Activated naive CD4-positive, alpha-beta T cell treated with anti-CD3 and anti-CD28 coated beads for 36 hours (primary cell): ENCODE measurements at regions of chr2 and their contacts with region 1.

Region 1: GRCh38 chr2:197255543-197255942 is 55.0 kb downstream of the ANKRD44 start:
- DNase-seq: peak; percentile 87
- H3K4me3 Mint-ChIP-seq: peak overlapping the region; percentile 75
- H3K27ac Mint-ChIP-seq: peak overlapping the region; percentile 97
- H3K4me1 Mint-ChIP-seq: peaks cover 75% of the 10 kb centered on the region
- H3K27me3 Mint-ChIP-seq: no peaks in the 10 kb centered on the region

Region 2: GRCh38 chr2:197198890-197199289 is 56.7 kb before region 1 on chr2:
- CTCF ChIA-PET with region 1: interaction called, 3 read pairs
- intact Hi-C with region 1: loop called (anchors 1 kb)
- DNase-seq: peak; percentile 93
- H3K4me3 Mint-ChIP-seq: peak overlapping the region; percentile 83
- H3K27ac Mint-ChIP-seq: peak overlapping the region; percentile 96
- H3K4me1 Mint-ChIP-seq: peaks cover 86% of the 10 kb centered on the region
- H3K27me3 Mint-ChIP-seq: no peaks in the 10 kb centered on the region

Region 3: DNA sequence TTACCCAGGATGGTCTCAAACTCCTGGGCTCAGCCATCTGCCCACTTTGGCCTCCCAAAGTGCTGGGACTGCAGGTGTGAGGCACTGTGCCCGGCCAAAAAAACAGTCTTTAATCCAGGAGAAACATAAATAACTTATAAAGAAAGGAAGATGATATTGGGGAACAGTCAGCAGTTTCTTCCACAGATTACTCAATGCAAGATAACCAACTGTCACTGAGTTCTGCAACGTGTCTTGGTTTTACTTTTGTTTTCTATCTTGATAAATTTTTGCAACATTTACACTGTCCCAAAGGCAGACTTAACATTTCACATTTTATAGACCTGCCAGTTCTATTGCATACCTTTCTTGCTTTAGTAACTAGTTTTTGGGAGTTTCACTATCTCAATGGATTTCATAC is 16.1 kb before region 1 on chr2:
- CTCF ChIA-PET with region 1: interaction called, 5 read pairs
- intact Hi-C with region 1: loop called (anchors 1 kb)
- DNase-seq: no peak
- H3K4me3 Mint-ChIP-seq: peak overlapping the region; percentile 78
- H3K27ac Mint-ChIP-seq: peak overlapping the region; percentile 91
- H3K4me1 Mint-ChIP-seq: peaks cover 85% of the 10 kb centered on the region
- H3K27me3 Mint-ChIP-seq: no peaks in the 10 kb centered on the region

Region 4: DNA sequence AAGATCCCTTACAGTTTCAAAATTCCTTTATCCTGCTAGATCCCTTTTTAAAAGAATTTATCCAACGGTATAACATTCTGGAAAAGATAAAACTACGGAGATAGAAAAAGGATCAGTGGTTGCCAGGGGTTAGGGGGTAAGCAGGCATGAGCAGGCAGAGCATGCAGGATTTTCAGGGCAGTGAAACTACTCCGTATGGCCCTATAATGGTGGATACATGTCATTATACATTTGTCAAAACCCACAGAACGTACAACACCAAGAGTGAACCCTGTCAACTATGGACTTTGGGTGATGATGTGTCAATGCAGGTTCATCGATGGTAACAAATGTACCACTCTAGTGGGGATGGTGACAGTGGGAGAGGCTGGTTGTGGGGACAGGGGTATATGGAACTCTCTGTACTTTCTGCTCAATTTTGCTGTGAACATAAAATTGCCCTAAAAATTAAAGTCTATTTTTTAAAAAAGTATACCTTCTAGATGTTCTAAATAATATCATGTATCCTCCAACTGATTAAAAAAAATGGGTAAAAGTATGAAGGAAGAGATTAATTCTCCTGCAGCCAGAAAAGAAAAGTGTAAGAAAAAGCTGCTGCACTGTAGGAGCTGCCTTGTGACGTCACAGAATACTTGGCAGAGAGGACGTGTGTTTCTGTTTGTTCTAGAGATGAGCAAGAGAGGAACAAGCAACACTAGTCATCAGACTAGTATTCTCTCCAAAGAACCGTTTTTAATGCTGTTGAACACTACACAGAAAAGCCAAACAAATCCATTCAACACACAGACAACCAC is 31.5 kb after region 1 on chr2:
- CTCF ChIA-PET with region 1: interaction called, 5 read pairs
- intact Hi-C with region 1: loop called (anchors 1 kb)
- DNase-seq: peak; percentile 74
- H3K4me3 Mint-ChIP-seq: peak overlapping the region; percentile 64
- H3K27ac Mint-ChIP-seq: peak overlapping the region; percentile 97
- H3K4me1 Mint-ChIP-seq: peaks cover 81% of the 10 kb centered on the region
- H3K27me3 Mint-ChIP-seq: no peaks in the 10 kb centered on the region

Region 5: GRCh38 chr2:197304556-197305011 is 49.0 kb after region 1 on chr2:
- CTCF ChIA-PET with region 1: interaction called, 11 read pairs
- intact Hi-C with region 1: loop called (anchors 1 kb)
- DNase-seq: peak; percentile 68
- H3K4me3 Mint-ChIP-seq: peak overlapping the region; percentile 77
- H3K27ac Mint-ChIP-seq: peak overlapping the region; percentile 96
- H3K4me1 Mint-ChIP-seq: peaks cover 68% of the 10 kb centered on the region
- H3K27me3 Mint-ChIP-seq: no peaks in the 10 kb centered on the region